Vagina (tissue), 2 donors: ENCODE measurements at regions of chr12 and their contacts with region 1.

Region 1: DNA sequence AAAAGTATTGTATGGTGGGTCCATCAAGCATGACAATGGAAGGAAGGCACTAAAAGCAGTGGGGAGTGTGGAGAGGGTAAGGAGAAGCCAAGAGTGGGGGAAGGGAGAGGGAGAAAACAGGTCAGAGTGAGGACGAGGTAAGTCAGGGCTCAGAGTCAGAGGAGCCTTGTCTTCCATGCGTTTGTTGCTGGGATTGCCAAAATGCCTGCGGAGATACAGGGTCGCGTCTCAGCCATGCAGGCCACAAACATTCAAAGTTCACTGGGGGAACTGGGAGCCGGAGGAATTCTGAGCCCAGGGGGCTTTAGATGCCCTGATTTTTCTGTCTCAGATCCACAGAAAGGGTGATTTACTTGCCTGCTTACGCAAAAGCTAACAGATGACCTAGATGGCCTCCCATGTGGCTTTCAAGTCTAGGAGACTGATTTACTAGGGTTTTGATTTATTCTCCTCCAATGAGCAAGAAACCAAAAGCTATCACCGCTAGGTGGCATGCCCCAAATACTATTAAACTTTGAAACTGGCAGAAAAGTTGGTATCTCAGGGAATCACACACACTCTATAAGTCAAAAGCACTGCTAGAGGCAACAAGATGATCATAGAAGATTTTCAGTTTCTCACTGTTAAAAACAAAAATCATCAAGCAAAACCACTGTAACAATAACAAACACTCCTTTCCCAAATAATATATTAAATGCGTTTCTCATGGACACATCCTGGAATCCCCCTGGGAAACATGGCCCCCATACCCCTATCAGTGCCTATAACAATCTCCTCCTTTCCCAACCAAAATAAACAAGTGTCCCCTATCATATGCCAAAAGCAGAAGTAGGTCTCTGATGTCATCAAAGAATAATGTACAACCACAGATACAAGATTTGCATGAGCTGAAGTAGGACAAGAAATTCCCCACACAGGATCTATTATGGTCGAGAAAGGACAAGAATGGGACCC is 26.6 kb upstream of the MDM1 start:
- DNase-seq: no peak
- H3K4me3 ChIP-seq: no peak overlapping the region
- H3K27ac ChIP-seq: peak overlapping the region; percentile 24
- H3K4me1 ChIP-seq: peaks cover 11% of the 10 kb centered on the region
- H3K27me3 ChIP-seq: no peaks in the 10 kb centered on the region
- CTCF ChIP-seq: peak in 2 of 3 experiments; percentile 26 to 73
- POLR2A ChIP-seq: no peak

Region 2: DNA sequence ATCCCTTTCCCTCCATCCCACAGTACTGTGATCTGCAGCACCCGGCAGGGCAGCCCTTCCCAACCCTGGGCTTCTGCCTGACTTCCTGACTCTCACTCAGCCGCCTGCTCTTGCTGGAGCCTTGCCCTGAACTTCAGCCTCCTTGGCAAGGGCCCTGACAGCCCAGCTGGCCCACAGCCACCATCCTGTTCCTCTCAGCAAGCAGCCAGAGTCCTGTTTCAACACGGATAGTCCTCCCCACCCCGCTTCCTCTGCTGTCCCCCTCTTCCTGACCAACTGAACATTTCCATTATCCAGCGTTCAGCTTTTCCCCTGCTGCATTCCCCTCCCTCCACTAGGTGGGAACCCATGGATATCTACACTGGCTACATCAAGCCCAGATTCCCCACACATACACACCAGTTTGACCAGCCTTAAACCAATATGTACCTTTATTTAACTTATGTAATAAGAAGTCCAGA is 47.4 kb after region 1 on chr12:
- intact Hi-C with region 1: no loop called
- DNase-seq: peak in 1 of 2 donors; percentile 97
- H3K4me3 ChIP-seq: peak overlapping the region in 1 of 2 donors; percentile 9
- H3K27ac ChIP-seq: peak overlapping the region; percentile 61
- H3K4me1 ChIP-seq: peaks cover 14% of the 10 kb centered on the region
- H3K27me3 ChIP-seq: no peaks in the 10 kb centered on the region
- CTCF ChIP-seq: no peak
- POLR2A ChIP-seq: no peak

Region 3: DNA sequence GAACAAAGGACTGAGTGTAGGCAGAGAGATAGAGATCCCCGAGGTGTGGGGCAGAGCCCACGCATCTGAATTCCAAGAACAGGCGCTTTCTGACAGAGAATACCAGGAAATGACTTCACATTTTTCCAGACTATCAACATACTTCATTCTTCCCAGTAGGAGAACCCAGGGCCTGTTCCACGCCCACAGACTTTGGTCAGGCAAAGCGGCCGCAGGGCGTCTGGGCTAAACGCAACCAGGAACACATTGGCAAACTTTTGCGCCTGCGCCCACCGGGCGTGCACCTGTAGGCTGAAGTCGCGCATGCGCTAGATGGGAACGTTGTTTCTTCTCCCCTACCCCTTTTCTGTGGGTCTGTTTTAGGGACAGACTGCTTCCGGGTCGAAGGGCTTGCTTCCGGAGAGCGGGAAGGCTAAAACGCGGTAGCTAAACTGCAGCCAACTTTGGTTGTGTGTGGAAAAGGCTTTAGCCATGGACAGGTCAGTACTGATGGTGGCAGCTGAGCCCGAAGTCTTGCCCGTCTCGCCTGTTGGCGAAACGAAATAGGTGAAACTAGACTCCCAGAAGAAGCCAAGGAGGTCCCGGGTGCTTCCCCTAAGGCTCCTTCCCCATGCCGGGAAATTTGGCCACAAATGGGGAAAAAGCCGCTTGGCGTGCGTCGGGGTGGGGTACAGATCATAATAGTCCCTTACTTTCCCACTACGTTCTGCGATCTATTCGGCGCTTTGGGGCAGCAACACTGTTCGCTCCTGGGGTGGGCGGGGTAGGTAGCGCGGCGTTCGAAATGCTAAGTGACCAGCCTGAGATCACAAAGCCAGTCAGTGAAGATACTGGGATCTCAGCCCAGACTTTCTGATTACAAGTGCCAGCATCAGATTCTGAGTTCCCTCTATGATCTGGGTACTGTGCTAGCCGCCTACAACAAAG is 328.0 kb after region 1 on chr12 and contains the start of gene NUP107:
- intact Hi-C with region 1: loop called (anchors 5 kb)
- DNase-seq: peak in 1 of 2 donors; percentile 98
- H3K4me3 ChIP-seq: peak within 1 kb of the TSS; percentile 82 to 84
- H3K27ac ChIP-seq: peak within 1 kb of the TSS; percentile 60
- H3K4me1 ChIP-seq: peaks cover 21% of the 10 kb centered on the region
- H3K27me3 ChIP-seq: no peaks in the 10 kb centered on the region
- CTCF ChIP-seq: peak in 1 of 3 experiments; percentile 31
- POLR2A ChIP-seq: no peak
- total RNA-seq, gene NUP107: 42.5 TPM